ENCODE measurements at regions of chr7 and their contacts with region 1.

Region 1: DNA sequence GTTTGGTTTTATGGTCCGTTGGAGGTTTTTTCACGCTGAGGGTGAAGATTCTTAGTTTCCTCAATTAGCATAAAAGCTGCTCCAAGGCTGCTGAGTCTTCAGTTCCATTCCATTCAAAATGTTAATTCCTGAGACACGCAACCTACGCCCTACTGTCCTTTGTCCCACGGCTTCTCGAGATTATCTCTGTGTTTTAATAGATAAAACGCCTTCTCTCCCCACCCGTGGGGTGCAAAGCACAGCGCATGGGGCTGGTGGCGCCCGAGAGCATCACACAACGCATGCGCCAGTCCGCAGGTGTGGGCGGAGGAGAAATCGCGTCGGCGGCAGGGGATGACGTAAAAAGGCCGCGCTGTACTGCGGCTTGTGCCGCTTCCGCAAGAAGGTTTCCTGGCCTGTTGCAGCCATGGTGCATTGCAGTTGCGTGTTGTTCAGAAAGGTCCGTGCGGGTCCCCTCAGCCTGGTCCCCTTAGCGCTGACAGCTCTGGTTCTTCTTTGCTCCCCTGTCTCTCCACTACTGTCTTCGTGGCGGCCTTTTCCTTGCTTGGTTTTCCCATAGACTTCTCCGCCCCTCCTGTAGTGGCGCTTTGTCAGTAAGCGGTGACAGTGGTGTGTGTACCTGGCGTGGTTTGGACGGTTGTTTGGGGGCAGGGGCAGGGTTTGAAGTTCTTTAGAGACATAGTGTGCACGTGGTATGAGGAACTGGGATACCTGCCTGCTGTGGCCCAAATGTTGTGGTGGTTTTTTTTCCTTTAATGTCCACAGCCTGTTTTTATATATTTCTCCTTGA is at the start of gene GTPBP10:
- DNase-seq: peak; percentile 95
- ATAC-seq: peak; percentile 100
- total RNA-seq, gene GTPBP10: 24.8 TPM

Region 2: DNA sequence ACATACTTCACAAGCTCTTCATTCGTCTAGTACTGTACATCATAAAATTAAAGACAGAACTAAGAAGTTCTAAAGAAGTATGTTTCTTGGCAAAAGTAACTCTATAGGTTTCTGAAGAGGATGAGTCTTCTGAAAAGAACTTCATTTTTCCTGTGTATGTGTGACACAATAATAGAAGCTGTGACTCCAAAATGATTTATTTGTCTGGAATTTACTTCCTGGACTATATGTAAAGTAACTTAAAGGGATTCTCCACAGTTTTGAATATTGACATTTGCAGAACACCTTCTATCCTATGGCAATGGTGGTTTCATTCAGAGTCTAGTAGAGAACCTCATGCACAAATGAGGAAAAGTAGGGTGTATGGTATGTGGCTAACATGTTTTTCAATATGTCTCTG is 36.9 kb after region 1 on chr7:
- intact Hi-C with region 1: loop called (anchors 5 kb)
- DNase-seq: no peak
- ATAC-seq: no peak

Region 3: DNA sequence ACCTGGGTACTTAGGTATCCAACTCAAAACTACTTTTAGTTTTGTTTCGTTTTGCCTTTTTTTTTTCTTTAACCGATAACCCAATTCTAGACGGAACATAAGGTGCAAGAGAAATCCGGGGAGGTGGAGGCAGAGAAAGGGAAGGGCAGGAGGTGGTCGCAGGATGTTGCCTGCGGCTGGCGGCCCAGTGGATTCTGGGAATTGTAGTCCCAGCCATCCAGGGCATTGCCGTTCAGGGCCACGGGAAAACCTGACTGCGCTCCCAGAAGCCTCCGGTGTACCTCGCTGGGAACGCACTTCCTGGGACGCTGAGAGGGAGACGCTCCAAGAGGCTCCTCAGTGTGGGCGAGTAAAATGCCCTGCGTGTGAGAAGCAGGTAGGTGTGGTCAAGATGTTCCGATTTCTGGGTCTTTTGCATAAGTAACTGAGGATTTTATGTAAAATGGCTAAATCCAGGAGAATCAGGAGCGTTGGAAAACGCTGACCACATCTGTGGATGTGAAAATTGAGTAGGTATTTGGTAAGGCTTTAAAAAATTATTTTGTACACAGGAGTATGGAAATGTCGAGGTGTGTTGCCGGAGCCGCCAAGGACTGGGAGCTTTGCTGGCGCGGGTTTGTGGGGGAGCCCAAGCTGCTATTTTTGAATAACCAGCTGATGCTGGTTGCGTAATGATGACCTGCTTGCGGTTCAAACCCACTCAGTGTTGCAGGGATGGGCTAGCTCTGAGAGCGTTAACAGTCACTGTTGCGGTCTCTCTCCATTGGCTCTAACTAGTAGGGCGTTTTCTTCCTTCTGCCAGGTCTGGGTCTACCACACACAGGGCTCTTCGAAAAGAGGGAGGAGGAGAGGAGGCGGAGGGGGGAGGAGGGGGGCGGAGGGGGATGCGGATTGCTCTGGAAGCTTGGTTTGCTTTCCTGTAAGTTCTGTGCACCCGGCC is 56.9 kb after region 1 on chr7 and contains the start of gene CLDN12:
- intact Hi-C with region 1: loop called (anchors 2 kb)
- DNase-seq: peak; percentile 89
- ATAC-seq: peak; percentile 96
- total RNA-seq, gene CLDN12: 34.1 TPM

Measured in Right ventricle myocardium inferior (tissue), 1 donor.